Activated B cell treated with CpG ODN at 0.5 μM for 24 hours (primary cell): ENCODE measurements at regions of chr16 and their contacts with region 1.

Region 1: GRCh38 chr16:27109666-27110523 is 43.2 kb downstream of the C16orf82 start:
- DNase-seq: peak; percentile 87
- ATAC-seq: peak; percentile 70
- H3K4me3 Mint-ChIP-seq: peak overlapping the region; percentile 70
- H3K27ac Mint-ChIP-seq: no peak overlapping the region
- H3K4me1 Mint-ChIP-seq: peaks cover 42% of the 10 kb centered on the region
- H3K27me3 Mint-ChIP-seq: no peaks in the 10 kb centered on the region
- CTCF ChIP-seq: peak; percentile 47

Region 2: DNA sequence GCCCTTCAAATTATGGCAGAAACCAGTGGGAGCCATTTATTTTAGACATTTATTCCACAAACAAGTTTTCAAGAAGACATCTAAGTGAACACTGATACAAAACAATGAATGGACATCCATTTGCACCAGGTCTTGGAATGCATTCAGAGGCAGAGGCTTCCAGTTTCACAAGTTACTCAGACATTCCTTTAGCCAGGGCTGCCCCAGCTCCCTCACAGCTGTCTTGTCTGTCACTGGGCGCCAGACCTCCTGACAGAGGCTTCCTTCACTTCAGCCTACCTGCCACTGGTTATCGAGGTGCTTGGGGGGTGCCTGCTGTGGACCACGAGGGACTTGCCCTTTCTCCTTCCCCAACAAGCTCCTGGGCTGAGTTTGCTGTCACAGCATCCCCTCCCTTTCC is 1873.9 kb before region 1 on chr16:
- CTCF ChIA-PET with region 1: no interaction called
- POLR2A ChIA-PET with region 1: no interaction called
- intact Hi-C with region 1: loop called (anchors 1 kb)
- DNase-seq: no peak
- ATAC-seq: no peak
- H3K4me3 Mint-ChIP-seq: no peak overlapping the region
- H3K27ac Mint-ChIP-seq: no peak overlapping the region
- H3K4me1 Mint-ChIP-seq: no peaks in the 10 kb centered on the region
- H3K27me3 Mint-ChIP-seq: no peaks in the 10 kb centered on the region
- CTCF ChIP-seq: no peak

Region 3: GRCh38 chr16:25279491-25279890 is 1830.4 kb before region 1 on chr16:
- CTCF ChIA-PET with region 1: interaction called, 3 read pairs
- POLR2A ChIA-PET with region 1: no interaction called
- intact Hi-C with region 1: loop called (anchors 5 kb)
- DNase-seq: no peak
- ATAC-seq: no peak
- H3K4me3 Mint-ChIP-seq: no peak overlapping the region
- H3K27ac Mint-ChIP-seq: no peak overlapping the region
- H3K4me1 Mint-ChIP-seq: no peaks in the 10 kb centered on the region
- H3K27me3 Mint-ChIP-seq: peaks cover 3% of the 10 kb centered on the region
- CTCF ChIP-seq: no peak

Region 4: GRCh38 chr16:25838724-25839186 is 1271.1 kb before region 1 on chr16:
- CTCF ChIA-PET with region 1: no interaction called
- POLR2A ChIA-PET with region 1: no interaction called
- intact Hi-C with region 1: loop called (anchors 1 kb)
- DNase-seq: no peak
- ATAC-seq: no peak
- H3K4me3 Mint-ChIP-seq: no peak overlapping the region
- H3K27ac Mint-ChIP-seq: no peak overlapping the region
- H3K4me1 Mint-ChIP-seq: no peaks in the 10 kb centered on the region
- H3K27me3 Mint-ChIP-seq: peaks cover 5% of the 10 kb centered on the region
- CTCF ChIP-seq: peak; percentile 72

Region 5: GRCh38 chr16:27461483-27462171 is 351.7 kb after region 1 on chr16:
- CTCF ChIA-PET with region 1: no interaction called
- POLR2A ChIA-PET with region 1: no interaction called
- intact Hi-C with region 1: loop called (anchors 1 kb)
- DNase-seq: no peak
- ATAC-seq: no peak
- H3K4me3 Mint-ChIP-seq: no peak overlapping the region
- H3K27ac Mint-ChIP-seq: no peak overlapping the region
- H3K4me1 Mint-ChIP-seq: peaks cover 8% of the 10 kb centered on the region
- H3K27me3 Mint-ChIP-seq: no peaks in the 10 kb centered on the region
- CTCF ChIP-seq: no peak